ENCODE measurements at regions of chr1 and their contacts with region 1.

Region 1: GRCh38 chr1:171485375-171486047 is at the start of gene PRRC2C:
- H3K4me3 ChIP-seq: peak within 1 kb of the TSS; percentile 99
- H3K27ac ChIP-seq: peak within 1 kb of the TSS; percentile 94
- H3K4me1 ChIP-seq: peaks cover 8% of the 10 kb centered on the region
- CTCF ChIP-seq: peak; percentile 80

Region 2: DNA sequence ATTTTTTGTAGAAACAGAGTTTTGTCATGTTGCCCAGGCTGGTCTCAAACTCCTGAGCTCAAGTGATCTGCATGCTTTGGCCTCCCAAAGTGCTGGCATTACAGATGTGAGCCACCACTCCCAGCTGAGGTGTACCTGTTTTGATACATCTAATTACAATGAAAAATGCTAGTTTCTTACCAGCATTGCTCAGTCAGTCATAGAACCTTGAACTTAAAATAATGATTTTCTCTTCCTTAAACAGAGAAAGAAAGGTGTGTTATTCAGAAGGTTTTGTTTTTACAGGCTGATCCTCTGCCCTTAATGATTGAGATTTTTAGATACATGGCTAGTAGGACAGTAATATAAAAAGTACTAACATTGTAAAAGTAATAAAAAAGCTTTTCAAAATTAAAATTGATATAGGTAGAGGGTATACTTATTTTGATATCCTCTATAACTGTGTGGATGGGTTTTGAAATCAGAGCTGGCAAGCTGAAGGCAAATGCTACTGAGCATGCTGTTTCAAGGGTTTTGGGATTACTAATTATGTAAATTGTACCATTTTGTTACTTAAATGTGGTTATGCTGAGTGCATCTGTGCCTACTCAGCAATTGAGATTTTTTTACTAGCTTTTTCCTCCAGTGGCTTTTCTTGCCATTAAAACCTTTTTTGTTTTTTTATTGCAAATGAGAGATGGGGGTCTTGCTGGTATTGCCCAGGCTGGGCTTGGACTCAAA is 16.0 kb after region 1 on chr1:
- CTCF ChIA-PET with region 1: interaction called, 14 read pairs
- POLR2A ChIA-PET with region 1: interaction called, 4 read pairs
- H3K4me3 ChIP-seq: no peak overlapping the region
- H3K27ac ChIP-seq: no peak overlapping the region
- H3K4me1 ChIP-seq: peaks cover 9% of the 10 kb centered on the region; the same call in 1 of the 2 replicates
- CTCF ChIP-seq: no peak

Region 3: GRCh38 chr1:171515299-171515698 is 29.8 kb after region 1 on chr1:
- CTCF ChIA-PET with region 1: interaction called, 10 read pairs
- POLR2A ChIA-PET with region 1: interaction called, 3 read pairs
- H3K4me3 ChIP-seq: no peak overlapping the region
- H3K27ac ChIP-seq: no peak overlapping the region
- H3K4me1 ChIP-seq: no peaks in the 10 kb centered on the region
- CTCF ChIP-seq: no peak

Region 4: GRCh38 chr1:171727778-171728177 is 242.3 kb after region 1 on chr1:
- CTCF ChIA-PET with region 1: no interaction called
- POLR2A ChIA-PET with region 1: no interaction called
- H3K4me3 ChIP-seq: no peak overlapping the region
- H3K27ac ChIP-seq: no peak overlapping the region
- H3K4me1 ChIP-seq: no peaks in the 10 kb centered on the region
- CTCF ChIP-seq: no peak